Right ventricle myocardium inferior (tissue), 1 donor: ENCODE measurements at regions of chr7 and their contacts with region 1.

Region 1: GRCh38 chr7:35906191-35906908 is 105.5 kb downstream of the SEPTIN7 start:
- DNase-seq: no peak
- ATAC-seq: peak; percentile 83

Region 2: GRCh38 chr7:35707422-35707821 is 198.9 kb before region 1 on chr7:
- intact Hi-C with region 1: loop called (anchors 1 kb)
- DNase-seq: no peak
- ATAC-seq: no peak

Region 3: DNA sequence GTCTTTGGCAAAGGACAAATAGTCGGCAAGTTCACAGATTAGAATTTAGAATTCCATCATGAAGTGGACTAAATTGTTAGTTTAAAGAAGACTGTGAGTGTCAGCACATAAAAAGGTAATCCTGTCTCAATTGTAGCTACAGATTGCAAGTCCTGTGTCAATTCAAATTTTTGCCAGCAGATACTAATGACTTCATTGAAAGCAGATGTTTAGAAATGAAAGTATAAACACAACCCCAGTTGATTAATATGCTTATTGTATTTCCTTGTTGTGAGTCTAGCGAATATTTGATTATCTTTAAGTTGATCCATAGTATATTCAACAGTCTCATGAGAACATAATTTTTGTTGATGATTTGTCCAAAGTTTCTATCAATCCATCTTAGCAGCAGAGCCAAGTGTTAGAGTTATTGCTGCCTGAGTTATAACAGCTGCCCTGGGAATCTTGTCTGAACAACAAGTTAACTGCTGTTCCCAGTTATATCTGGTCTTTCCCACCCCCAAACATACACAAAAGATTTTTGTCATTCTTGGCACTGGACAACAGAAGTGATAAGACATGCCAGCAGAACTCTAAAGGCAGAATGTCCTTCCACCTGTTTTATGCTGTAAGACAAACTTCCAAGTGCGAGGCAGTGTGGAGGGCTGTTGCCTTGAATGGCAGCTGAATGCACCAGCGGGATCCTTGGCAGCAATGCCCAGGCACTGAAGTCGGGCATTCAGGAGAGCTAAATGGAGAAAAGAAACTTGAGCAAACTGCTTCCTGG is 190.1 kb before region 1 on chr7:
- intact Hi-C with region 1: loop called (anchors 1 kb)
- DNase-seq: no peak
- ATAC-seq: peak; percentile 54